ENCODE measurements at regions of chr15 and their contacts with region 1.

Region 1: GRCh38 chr15:92077353-92078085 is 224.0 kb downstream of the SLCO3A1 start:
- DNase-seq: peak; percentile 11 to 58 (median 37)
- ATAC-seq: peak; percentile 71
- H3K4me3 ChIP-seq: no peak overlapping the region
- H3K4me3 Mint-ChIP-seq: no peak overlapping the region
- H3K27ac ChIP-seq: no peak overlapping the region
- H3K27ac Mint-ChIP-seq: no peak overlapping the region
- H3K4me1 ChIP-seq: peaks cover 3 to 4% of the 10 kb centered on the region in 2 donors
- H3K4me1 Mint-ChIP-seq: peaks cover 4 to 42% (median 28%) of the 10 kb centered on the region in 7 donors
- H3K27me3 ChIP-seq: no peaks in the 10 kb centered on the region
- H3K27me3 Mint-ChIP-seq: no peaks in the 10 kb centered on the region

Region 2: DNA sequence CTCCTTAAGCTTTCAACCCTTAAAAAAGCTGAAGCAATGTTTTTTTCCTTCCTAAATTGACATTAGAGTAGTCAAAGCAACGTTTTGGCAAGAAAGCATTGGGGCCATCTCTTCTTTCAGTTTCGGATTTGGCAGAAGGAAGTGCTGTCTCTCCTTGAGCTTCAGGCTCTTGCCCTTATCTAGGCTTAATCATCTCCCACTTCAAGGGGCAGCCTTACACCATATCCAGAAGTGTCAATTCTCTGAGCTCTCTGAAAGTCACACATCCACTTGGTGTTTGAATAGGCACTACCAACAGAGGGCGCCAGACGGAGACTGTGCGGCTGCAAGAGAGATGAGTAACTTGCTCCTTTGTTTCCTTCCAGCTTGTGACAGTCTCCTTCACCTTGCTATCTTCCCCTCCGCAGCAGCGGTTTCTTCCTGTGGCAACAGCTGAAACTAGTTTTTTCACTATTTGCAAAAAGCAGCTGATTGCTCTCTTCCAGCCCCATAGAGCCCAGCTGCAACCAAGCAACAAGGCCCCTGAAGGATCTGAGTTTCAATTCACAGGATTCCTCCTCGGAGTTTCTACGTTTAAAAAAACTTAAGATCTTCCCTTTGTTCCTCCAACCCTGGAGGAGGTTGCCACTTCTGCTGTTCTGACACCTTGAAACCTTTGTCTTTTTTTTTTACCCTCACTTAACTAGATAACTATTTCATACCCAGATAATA is 371.0 kb before region 1 on chr15:
- CTCF ChIA-PET with region 1: interaction called, 19 read pairs
- POLR2A ChIA-PET with region 1: no interaction called
- intact Hi-C with region 1: loop called (anchors 1 kb)
- DNase-seq: peak; percentile 58 to 84 (median 77)
- ATAC-seq: peak; percentile 98
- H3K4me3 ChIP-seq: no peak overlapping the region
- H3K4me3 Mint-ChIP-seq: peak overlapping the region in 9 of 10 donors; percentile 48 to 77 (median 62)
- H3K27ac ChIP-seq: no peak overlapping the region
- H3K27ac Mint-ChIP-seq: peak overlapping the region in 7 of 9 donors; percentile 37 to 88 (median 75)
- H3K4me1 ChIP-seq: peaks cover 10 to 13% of the 10 kb centered on the region in 2 donors
- H3K4me1 Mint-ChIP-seq: peaks cover 11 to 24% (median 20%) of the 10 kb centered on the region in 7 donors
- H3K27me3 ChIP-seq: no peaks in the 10 kb centered on the region
- H3K27me3 Mint-ChIP-seq: peaks cover 0 to 27% (median 4%) of the 10 kb centered on the region in 5 donors

Measured in naive thymus-derived CD4-positive, alpha-beta T cell (primary cell).